Caco-2 (cell line): ENCODE measurements at regions of chr5 and their contacts with region 1.

Region 1: GRCh38 chr5:16467363-16468219 is 2.0 kb upstream of the ZNF622 start:
- DNase-seq: no peak
- H3K4me3 ChIP-seq: no peak overlapping the region
- H3K4me3 Mint-ChIP-seq: peak overlapping the region; percentile 92
- H3K27ac Mint-ChIP-seq: peak overlapping the region; percentile 92
- H3K4me1 ChIP-seq: peaks cover 11% of the 10 kb centered on the region; the same call in 1 of the 2 replicates
- H3K4me1 Mint-ChIP-seq: peaks cover 33% of the 10 kb centered on the region
- H3K27me3 ChIP-seq: no peaks in the 10 kb centered on the region
- H3K27me3 Mint-ChIP-seq: no peaks in the 10 kb centered on the region
- CTCF ChIP-seq: no peak

Region 2: GRCh38 chr5:15472116-15472515 is 995.5 kb before region 1 on chr5:
- CTCF ChIA-PET with region 1: no interaction called
- POLR2A ChIA-PET with region 1: no interaction called
- intact Hi-C with region 1: no loop called
- DNase-seq: no peak
- H3K4me3 ChIP-seq: no peak overlapping the region
- H3K4me3 Mint-ChIP-seq: no peak overlapping the region
- H3K27ac Mint-ChIP-seq: no peak overlapping the region
- H3K4me1 ChIP-seq: no peaks in the 10 kb centered on the region
- H3K4me1 Mint-ChIP-seq: no peaks in the 10 kb centered on the region
- H3K27me3 ChIP-seq: no peaks in the 10 kb centered on the region
- H3K27me3 Mint-ChIP-seq: peaks cover 5% of the 10 kb centered on the region
- CTCF ChIP-seq: no peak

Region 3: GRCh38 chr5:16483361-16483760 is 15.8 kb after region 1 on chr5:
- CTCF ChIA-PET with region 1: no interaction called
- POLR2A ChIA-PET with region 1: interaction called, 8 read pairs
- intact Hi-C with region 1: loop called (anchors 1 kb)
- DNase-seq: peak; percentile 60 to 66
- H3K4me3 ChIP-seq: no peak overlapping the region
- H3K4me3 Mint-ChIP-seq: peak overlapping the region; percentile 42
- H3K27ac Mint-ChIP-seq: peak overlapping the region; percentile 34
- H3K4me1 ChIP-seq: peaks cover 70% of the 10 kb centered on the region
- H3K4me1 Mint-ChIP-seq: peaks cover 51% of the 10 kb centered on the region
- H3K27me3 ChIP-seq: no peaks in the 10 kb centered on the region
- H3K27me3 Mint-ChIP-seq: no peaks in the 10 kb centered on the region
- CTCF ChIP-seq: no peak